ENCODE measurements at regions of chr1 and their contacts with region 1.

Region 1: DNA sequence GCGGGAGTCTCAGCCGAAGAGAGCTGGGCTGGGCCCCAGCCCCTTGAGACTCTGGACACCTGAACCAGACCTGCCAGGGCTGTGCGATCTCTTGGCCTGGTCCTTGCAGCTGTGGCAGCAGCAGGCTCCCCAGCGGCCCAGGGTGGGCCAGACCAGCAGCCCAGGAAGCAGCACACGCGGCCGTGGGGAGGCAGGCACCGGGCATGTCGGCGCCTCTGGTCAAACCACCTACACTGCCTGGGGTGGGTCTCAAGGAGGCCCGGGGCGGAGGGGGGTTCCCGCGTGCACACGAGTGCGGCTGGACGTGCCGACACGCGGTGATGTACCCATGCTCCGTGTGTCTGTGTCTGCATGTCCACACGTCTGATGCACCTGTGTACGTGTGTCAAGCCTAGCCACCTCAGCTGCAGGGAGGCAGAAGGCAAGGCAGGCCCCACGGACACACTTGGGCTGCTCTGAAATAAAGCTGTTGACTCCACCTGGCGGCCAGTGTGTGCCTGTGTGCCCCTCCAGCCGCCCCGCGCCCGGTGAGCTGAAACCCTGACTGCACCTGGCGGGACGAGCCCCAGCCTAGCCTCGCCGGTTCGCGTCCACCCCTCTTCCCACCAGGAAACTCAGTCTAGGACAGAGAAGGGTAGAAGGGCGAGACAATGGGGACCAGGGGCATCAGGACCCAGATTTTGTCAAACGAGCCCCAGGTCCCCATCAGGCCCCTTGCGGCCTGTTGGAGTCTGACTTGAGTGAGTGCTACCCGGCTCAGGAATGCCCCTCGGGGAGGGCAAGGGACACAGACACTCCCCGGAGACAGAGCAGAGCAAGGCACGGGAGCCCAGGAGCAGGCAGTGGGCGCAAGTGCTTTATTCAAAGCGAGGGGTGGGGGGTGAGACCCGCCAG is 11.6 kb downstream of the SCNN1D start:
- DNase-seq: peak; percentile 48 to 78 (median 55)
- H3K4me3 ChIP-seq: no peak overlapping the region
- H3K4me3 Mint-ChIP-seq: no peak overlapping the region
- H3K27ac ChIP-seq: no peak overlapping the region
- H3K27ac Mint-ChIP-seq: no peak overlapping the region
- H3K4me1 ChIP-seq: no peaks in the 10 kb centered on the region
- H3K4me1 Mint-ChIP-seq: peaks cover 0 to 4% (median 0%) of the 10 kb centered on the region in 3 donors
- H3K27me3 ChIP-seq: no peaks in the 10 kb centered on the region
- H3K27me3 Mint-ChIP-seq: no peaks in the 10 kb centered on the region

Region 2: GRCh38 chr1:1122078-1122811 is 169.6 kb before region 1 on chr1:
- CTCF ChIA-PET with region 1: interaction called, 52 read pairs
- POLR2A ChIA-PET with region 1: no interaction called
- DNase-seq: peak; percentile 75 to 87 (median 75)
- H3K4me3 ChIP-seq: peak overlapping the region; percentile 43
- H3K4me3 Mint-ChIP-seq: peak overlapping the region in 1 of 7 donors; percentile 13
- H3K27ac ChIP-seq: no peak overlapping the region
- H3K27ac Mint-ChIP-seq: no peak overlapping the region
- H3K4me1 ChIP-seq: peaks cover 11% of the 10 kb centered on the region
- H3K4me1 Mint-ChIP-seq: peaks cover 0 to 3% (median 0%) of the 10 kb centered on the region in 3 donors
- H3K27me3 ChIP-seq: peaks cover 5% of the 10 kb centered on the region
- H3K27me3 Mint-ChIP-seq: peaks cover 6 to 9% of the 10 kb centered on the region in 2 donors